ENCODE measurements at regions of chr1 and their contacts with region 1.

Region 1: DNA sequence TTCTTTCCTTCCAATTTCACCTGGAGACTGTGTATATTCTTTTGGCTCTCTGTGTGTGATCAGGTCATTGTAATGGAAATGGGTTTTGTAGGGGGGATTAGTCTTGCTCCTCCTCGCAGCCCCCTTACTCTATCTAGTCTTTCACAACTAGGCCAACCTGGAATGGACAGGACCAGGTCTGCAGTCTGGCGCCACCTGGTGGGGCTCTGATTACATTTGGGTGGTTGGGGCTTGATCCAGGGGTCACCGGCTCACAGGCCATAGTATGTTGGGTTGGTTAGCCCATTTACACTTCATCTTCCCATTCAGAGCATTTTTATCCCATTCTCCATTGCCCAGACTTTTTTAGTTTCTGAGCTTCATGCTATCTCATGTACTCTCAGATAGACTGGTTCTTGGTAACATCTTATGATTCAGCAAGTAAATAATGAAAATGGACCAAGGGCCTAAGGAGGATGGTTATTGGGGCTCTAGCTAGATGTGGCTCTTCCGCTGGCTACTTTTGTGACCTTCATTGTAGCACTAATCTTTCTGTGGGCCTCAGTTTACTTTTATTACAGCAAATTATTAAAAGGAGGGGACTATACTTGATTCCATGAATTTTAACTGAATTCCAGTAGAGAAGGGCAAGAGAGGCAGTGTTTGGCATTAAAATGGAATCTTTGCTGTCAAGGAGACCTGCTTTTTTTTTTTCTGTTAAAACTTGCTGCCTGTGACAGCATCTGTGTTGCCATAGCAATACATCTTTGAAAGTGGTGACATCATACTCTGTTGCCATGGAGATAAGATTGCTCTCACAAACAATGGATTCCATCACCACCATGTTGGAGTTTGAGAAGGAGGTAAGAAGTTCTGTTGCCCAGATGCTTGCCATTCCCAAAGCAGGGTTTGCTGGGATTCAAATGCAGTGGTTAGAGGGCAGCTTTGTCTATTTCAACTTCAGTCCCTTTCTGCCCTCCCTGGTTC is 150.1 kb downstream of the PLXNA2 start:
- DNase-seq: peak; percentile 60 to 83 (median 70)
- H3K4me3 ChIP-seq: no peak overlapping the region
- H3K27ac ChIP-seq: no peak overlapping the region
- H3K4me1 ChIP-seq: peaks cover 9% of the 10 kb centered on the region
- H3K27me3 ChIP-seq: no peaks in the 10 kb centered on the region
- CTCF ChIP-seq: peak in 2 of 3 donors; percentile 58 to 62
- EP300 ChIP-seq: no peak
- POLR2A ChIP-seq: no peak

Region 2: DNA sequence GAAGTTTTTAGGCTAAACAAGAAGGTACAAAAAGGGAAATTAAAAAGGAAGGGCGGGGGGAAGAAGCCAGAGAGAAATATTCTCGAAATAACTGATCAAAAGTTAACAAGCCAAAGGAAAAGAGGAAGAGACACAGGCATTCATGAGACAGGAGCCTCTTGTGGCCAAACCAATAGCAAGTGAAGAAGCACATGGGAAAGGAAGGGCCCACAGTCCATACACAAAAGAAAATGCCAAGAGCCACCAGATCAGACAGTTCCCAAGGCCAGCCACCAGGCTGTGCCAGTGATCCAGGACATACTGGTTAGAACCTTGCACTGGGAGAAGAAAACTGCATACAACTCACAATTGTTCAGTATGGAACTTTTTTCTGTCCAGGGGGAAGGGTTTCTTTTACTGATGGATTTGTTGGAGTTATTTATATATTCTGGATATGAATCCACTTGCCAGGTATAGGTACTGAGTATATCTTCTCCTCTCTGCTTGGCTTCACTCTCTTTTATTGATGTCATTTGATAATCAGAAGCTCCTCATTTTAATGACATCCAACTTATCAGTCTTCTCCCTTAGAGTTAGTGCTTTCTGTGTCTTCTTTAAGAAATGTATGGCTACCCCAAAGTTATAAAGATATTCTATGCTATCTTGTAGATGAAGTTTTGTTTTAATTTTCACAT is 265.4 kb before region 1 on chr1:
- intact Hi-C with region 1: no loop called
- DNase-seq: peak; percentile 59 to 76 (median 64)
- H3K4me3 ChIP-seq: no peak overlapping the region
- H3K27ac ChIP-seq: peak overlapping the region in 1 of 2 donors; percentile 8
- H3K4me1 ChIP-seq: peaks cover 24% of the 10 kb centered on the region
- H3K27me3 ChIP-seq: no peaks in the 10 kb centered on the region
- CTCF ChIP-seq: peak; percentile 36 to 79 (median 68)
- EP300 ChIP-seq: no peak
- POLR2A ChIP-seq: no peak

Region 3: GRCh38 chr1:208029381-208030287 is 64.4 kb before region 1 on chr1:
- intact Hi-C with region 1: loop called in 1 of 4 experiments (anchors 10 kb)
- DNase-seq: peak in 3 of 5 donors; percentile 29 to 38 (median 35)
- H3K4me3 ChIP-seq: no peak overlapping the region
- H3K27ac ChIP-seq: peak overlapping the region; percentile 65 to 86
- H3K4me1 ChIP-seq: peaks cover 16% of the 10 kb centered on the region
- H3K27me3 ChIP-seq: no peaks in the 10 kb centered on the region
- CTCF ChIP-seq: no peak
- EP300 ChIP-seq: no peak
- POLR2A ChIP-seq: no peak

Region 4: DNA sequence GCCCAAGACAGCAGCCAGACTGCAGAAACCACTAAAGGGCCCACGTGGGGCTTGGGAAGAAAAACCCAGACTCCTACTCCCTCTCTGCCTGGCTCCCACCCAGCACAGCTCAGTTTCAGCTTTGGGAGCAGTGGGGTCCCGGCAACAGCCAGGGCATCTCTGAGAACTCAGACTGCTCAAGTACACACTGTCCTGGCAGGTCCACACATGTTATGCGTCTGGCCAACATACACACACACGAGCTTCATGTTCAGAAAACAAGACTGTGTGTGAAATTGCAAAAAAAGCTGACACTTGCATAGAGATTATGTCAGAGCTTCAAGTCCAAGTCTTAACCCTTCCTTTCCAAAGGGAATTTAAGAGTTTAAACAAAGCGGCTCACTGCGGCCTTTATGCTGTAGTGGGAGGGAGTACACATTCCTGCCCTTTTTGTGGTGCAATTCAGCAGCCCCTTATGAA is 46.5 kb before region 1 on chr1:
- intact Hi-C with region 1: loop called in 1 of 4 experiments (anchors 10 kb)
- DNase-seq: peak; percentile 85 to 96 (median 96)
- H3K4me3 ChIP-seq: no peak overlapping the region
- H3K27ac ChIP-seq: peak overlapping the region; percentile 40 to 79
- H3K4me1 ChIP-seq: peaks cover 42% of the 10 kb centered on the region
- H3K27me3 ChIP-seq: no peaks in the 10 kb centered on the region
- CTCF ChIP-seq: no peak
- EP300 ChIP-seq: peak; percentile 19
- POLR2A ChIP-seq: no peak